ENCODE measurements at regions of chr12 and their contacts with region 1.

Region 1: DNA sequence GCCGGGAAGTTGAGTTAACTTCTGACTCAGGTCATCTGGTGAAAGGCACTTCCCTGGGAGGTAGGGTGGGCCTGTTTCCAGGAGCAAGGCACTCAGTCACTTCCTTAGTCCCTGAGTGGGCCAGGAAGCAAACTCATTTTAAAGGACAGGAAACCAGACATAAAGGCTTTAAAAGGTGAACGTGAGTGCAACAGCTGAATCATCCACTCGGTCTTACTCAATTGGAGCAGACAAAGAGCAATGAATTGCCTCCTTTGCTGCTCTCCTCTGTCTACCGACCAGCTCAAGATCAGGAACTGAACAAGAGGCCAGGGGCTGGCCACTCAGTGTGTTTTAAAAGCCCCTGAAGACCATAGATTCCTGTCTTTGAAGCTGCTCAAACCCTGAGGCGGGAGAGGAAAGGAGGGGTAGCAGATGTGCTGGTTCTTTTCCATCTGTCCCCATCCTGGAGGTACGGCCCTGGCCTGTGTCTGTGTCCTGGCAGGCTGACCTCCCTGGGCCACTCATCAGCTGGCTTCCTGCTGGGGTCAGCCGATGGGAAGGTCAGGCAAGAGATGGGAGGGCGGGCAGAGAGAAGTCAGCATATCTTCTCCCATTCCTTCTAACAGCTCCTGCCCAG is 148.9 kb downstream of the PPM1H start:
- DNase-seq: peak; percentile 81

Region 2: DNA sequence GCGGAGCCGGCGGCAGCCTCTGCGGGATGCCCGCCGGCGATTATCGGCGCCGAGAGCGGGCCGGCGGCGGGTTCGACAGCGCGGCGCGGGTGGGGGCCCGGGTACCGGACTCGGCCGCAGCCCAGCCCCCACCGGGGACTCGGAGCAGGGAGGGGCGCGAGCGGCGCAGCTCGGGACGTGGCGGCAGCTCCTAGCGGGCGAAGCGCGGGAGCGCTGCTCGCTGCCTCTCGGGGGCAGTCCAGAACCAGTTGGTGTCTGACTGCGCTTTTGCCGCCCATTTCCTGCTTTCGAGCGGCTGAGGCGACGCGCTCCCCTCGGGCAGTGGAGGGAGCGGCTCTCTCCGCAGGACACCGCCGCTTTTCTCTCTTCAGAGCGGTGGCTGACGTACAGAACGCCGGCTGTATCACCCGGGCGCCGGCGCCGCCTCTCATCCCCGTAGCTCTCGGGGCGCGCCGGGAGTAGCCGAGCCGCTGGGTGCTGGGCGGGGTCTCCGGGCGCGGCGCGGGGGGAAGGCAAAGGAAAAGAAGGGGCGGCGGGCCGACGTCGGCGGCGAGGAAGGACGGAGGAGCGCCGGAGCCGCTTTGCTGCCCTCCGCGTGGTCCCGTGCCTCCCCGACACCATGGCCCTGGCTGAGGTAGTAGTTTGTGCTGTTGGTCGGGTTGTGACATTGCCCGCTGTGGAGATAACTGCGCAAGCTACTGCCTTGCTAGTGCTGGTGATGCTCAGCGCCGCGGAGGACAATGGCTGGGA is 182.8 kb before region 1 on chr12:
- in situ Hi-C with region 1: loop called (anchors 10 kb)
- DNase-seq: peak; percentile 92

Region 3: DNA sequence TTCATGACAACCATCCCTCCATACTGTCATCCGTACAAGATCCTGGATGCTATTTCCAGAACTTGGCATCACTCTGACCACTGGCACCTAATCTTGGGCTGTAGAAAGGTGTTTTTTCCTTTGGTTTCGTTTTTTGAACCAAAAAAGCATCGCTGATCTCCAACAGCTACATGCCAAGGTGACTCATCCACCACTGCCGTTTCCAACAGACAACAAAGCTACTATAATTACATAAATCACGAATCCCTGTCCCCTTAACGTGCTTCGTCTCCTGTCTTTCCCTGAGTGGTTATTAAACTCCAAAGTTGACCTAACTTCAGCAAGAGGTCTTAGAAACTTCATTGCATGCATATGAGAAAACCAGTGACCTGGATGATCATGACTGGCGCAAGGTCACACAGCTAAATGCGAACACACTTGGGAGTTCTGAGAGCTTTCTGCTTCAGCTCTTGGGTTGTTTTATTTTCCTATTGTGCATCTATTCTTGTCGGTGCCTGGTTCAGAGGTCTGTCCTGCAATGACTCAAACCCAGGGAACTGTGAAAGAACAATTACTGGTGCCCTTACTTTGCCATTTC is 49.0 kb after region 1 on chr12:
- in situ Hi-C with region 1: no loop called
- DNase-seq: peak; percentile 97

Region 4: DNA sequence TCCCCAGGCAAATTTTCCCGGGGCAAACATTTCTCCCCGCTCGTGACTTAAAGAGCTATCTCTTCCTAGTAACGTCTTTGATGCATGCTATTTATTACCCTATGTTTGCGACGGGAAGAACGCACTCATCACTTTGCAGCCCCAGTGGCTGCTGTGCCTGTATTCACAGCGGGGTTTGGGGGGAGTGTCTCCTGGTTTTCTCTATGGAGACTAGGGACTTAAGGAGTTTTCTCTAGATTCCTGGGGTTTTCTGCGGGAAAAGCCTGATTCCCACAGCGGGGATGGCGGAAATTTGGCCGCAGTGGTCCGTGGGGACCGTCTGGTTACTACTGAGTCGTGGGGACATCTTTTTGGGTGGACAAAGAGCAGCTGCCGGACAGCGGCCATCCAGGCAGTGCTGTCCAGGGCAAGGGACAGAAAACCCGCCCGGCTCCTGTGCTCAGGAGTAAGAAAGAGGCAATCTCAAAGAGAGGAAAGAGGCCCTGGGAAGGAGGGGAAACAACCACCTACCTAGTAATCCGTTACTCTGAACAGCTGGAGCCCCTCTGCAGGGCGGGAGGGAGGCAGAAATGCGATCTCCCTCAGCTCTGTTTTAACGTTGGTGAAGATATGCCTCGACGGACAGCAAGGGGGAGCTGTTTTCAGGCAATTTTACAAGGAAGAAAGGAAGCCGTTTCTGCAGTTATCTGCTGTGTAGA is 365.7 kb after region 1 on chr12:
- in situ Hi-C with region 1: no loop called
- DNase-seq: peak; percentile 63

Region 5: DNA sequence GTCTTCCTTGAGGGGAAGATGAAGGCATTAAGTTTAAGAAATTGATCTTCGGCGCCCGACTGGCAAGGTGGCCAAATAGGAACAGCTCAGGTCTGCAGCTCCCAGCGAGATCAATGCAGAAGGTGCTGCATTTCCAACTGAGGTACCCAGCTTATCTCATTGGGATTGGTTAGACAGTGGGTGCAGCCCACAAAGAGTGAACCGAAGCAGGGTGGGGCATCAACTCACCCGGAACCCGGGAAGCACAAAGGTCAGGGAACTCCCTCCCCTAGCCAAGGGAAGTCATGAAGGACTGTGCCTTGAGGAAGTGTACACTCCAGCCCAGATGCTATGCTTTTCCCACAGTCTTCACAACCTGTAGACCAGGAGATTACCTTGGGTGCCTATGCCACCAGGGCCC is 410.1 kb after region 1 on chr12:
- in situ Hi-C with region 1: no loop called
- DNase-seq: no peak

Measured in Caki2 (cell line).